Mammary epithelial cell (primary cell): ENCODE measurements at regions of chr14 and their contacts with region 1.

Region 1: GRCh38 chr14:94036313-94037050 is 10.3 kb downstream of the OTUB2 start:
- DNase-seq: peak; percentile 46
- H3K4me3 ChIP-seq: no peak overlapping the region
- H3K27ac ChIP-seq: no peak overlapping the region
- H3K4me1 ChIP-seq: no peaks in the 10 kb centered on the region
- H3K27me3 ChIP-seq: no peaks in the 10 kb centered on the region
- CTCF ChIP-seq: peak; percentile 86 to 90

Region 2: DNA sequence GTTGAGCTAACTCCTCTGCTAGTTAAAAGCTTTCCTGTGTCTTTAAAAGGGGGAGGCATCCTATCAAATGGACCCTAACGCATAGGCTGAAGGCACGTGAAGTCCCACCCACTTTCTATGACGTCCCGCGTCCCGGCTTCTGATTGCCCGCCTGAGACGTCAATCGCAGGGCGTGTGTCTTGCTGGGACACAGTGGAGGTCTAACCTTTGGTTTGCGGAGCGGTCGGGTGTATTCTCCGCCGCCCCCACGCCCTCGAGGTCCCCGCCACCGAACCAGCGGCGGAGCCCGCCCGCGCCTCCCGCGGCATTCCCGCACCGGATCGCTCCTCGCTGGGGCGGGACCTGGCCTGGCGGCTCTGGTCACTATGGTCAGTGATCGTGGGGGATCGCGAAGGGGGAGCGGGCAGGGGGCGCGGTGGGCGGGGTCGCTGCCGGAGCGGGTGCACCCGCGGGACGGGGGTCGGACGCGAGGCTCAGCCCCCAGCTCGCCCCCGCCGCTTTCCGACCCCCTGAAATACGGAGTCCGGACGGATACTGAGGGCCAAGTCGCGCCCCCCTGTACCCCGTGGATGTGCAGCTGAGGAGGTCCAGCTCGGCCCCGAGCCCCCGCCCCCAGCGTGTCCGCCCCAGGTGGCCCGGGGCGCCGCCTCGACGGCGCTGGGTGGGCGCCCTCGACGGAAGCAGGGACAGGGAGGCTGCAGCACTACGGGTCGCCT is 10.2 kb before region 1 on chr14 and contains the start of gene OTUB2:
- CTCF ChIA-PET with region 1: no interaction called
- dilution Hi-C with region 1: no loop called
- in situ Hi-C with region 1: no loop called
- intact Hi-C with region 1: no loop called
- DNase-seq: peak; percentile 100
- H3K4me3 ChIP-seq: peak within 1 kb of the TSS; percentile 43 to 64 (median 52)
- H3K27ac ChIP-seq: peak within 1 kb of the TSS; percentile 42
- H3K4me1 ChIP-seq: peaks cover 25% of the 10 kb centered on the region
- H3K27me3 ChIP-seq: no peaks in the 10 kb centered on the region
- CTCF ChIP-seq: no peak
- total RNA-seq, gene OTUB2: 3.7 to 4.8 TPM

Region 3: GRCh38 chr14:94051115-94051514 is 14.6 kb after region 1 on chr14:
- CTCF ChIA-PET with region 1: no interaction called
- dilution Hi-C with region 1: no loop called
- in situ Hi-C with region 1: no loop called
- intact Hi-C with region 1: no loop called
- DNase-seq: peak; percentile 24
- H3K4me3 ChIP-seq: no peak overlapping the region
- H3K27ac ChIP-seq: no peak overlapping the region
- H3K4me1 ChIP-seq: no peaks in the 10 kb centered on the region
- H3K27me3 ChIP-seq: no peaks in the 10 kb centered on the region
- CTCF ChIP-seq: peak in 1 of 2 donors; percentile 33

Region 4: DNA sequence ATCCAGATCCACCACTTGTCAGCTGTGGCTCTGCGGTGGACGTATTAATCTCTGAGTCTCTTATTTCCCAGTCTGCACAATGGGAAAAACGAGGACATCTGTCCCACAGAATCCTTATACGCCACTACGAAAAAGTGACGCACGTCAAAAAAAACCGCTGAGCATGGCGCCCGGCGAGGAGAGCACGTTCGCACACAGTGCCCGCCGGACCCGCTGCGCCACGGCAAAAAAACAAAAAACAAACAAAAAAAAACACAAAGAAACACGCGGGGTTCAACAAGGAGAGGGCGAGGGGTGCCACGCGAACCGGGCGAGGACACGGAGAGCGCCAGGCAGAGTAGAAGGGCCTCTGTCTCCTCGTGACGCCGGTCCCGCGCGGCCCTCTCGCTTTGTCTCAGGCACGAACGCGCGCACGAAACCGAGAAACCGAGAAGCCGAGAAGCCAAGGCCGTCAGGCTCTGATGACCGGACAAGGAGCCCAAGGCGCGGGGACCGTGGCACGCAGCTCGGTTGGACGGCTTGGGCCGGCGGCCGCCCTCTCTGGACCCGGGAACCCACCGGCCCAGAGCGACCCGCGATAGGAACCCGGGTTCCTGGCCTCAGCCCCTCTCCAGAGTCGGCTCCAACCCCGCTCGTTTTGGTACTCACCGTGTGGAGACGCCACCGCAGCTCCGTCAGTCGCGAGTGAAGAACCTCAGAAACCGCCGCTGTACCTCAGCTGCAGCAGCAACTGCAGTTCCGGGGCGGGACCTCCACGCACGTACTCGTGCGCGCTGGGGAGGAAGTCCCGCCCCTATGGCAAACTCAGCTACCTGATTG is 44.2 kb after region 1 on chr14 and contains the start of gene DDX24:
- CTCF ChIA-PET with region 1: no interaction called
- dilution Hi-C with region 1: loop called (anchors 5 kb)
- in situ Hi-C with region 1: no loop called
- intact Hi-C with region 1: no loop called
- DNase-seq: peak; percentile 95
- H3K4me3 ChIP-seq: peak within 1 kb of the TSS; percentile 93 to 99 (median 96)
- H3K27ac ChIP-seq: peak within 1 kb of the TSS; percentile 95
- H3K4me1 ChIP-seq: peaks cover 18% of the 10 kb centered on the region
- H3K27me3 ChIP-seq: no peaks in the 10 kb centered on the region
- CTCF ChIP-seq: no peak
- total RNA-seq, gene DDX24: 94.7 to 156 TPM

Region 5: DNA sequence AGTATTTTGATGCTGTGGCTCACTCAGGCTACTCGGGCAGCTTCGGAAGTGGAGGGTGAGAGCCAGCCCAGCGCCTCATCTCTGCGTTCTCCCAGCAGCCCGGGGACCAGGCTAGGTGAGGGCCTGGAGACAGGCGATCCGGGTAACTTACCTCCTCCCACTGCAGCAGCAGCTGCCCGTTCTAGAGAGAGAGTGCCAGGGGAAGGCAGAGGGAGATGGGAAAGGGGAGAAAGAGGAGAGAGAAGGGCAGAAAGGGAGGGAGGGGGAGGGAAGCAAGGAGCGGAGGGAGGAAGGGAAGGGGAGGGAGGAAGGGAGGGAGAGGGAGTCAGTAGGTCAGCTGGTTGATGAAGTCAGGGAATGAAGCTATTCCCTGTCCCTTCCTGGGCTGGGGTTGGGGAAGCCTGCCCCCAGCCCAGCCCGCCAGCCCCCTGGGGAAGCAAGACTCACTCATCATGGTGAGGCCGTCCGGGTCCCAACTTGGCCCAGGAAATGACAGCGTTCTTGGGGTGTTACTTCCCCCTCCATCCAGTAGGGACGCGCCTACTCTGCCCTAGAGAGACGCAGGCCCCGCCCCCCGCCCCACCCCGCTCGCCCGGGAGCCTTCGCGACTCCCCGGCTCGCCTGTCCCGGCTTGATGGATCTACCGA is 92.8 kb after region 1 on chr14 and contains the start of gene IFI27L2:
- CTCF ChIA-PET with region 1: interaction called, 6 read pairs
- dilution Hi-C with region 1: no loop called
- in situ Hi-C with region 1: loop called in 1 of 2 experiments (anchors 10 kb)
- intact Hi-C with region 1: loop called (anchors 2 kb)
- DNase-seq: peak; percentile 87
- H3K4me3 ChIP-seq: peak within 1 kb of the TSS; percentile 52 to 62 (median 57)
- H3K27ac ChIP-seq: no peak within 1 kb of the TSS
- H3K4me1 ChIP-seq: peaks cover 7% of the 10 kb centered on the region
- H3K27me3 ChIP-seq: no peaks in the 10 kb centered on the region
- CTCF ChIP-seq: peak in 1 of 2 donors; percentile 43
- total RNA-seq, gene IFI27L2: 68.0 to 122 TPM

Region 6: GRCh38 chr14:94180655-94181271 is 144.3 kb after region 1 on chr14:
- CTCF ChIA-PET with region 1: no interaction called
- dilution Hi-C with region 1: no loop called
- in situ Hi-C with region 1: loop called in 1 of 2 experiments (anchors 10 kb)
- intact Hi-C with region 1: loop called (anchors 1 kb)
- DNase-seq: peak; percentile 60
- H3K4me3 ChIP-seq: peak overlapping the region in 2 of 3 experiments; percentile 37 to 45
- H3K27ac ChIP-seq: peak overlapping the region; percentile 61
- H3K4me1 ChIP-seq: peaks cover 23% of the 10 kb centered on the region
- H3K27me3 ChIP-seq: no peaks in the 10 kb centered on the region
- CTCF ChIP-seq: peak; percentile 58 to 63

Region 7: GRCh38 chr14:94307410-94307992 is 271.0 kb after region 1 on chr14:
- CTCF ChIA-PET with region 1: no interaction called
- dilution Hi-C with region 1: no loop called
- in situ Hi-C with region 1: no loop called
- intact Hi-C with region 1: loop called (anchors 5 kb)
- DNase-seq: peak; percentile 30
- H3K4me3 ChIP-seq: no peak overlapping the region
- H3K27ac ChIP-seq: no peak overlapping the region
- H3K4me1 ChIP-seq: peaks cover 6% of the 10 kb centered on the region
- H3K27me3 ChIP-seq: no peaks in the 10 kb centered on the region
- CTCF ChIP-seq: peak; percentile 42 to 47

Region 8: GRCh38 chr14:94412671-94413638 is 376.5 kb after region 1 on chr14:
- CTCF ChIA-PET with region 1: no interaction called
- dilution Hi-C with region 1: no loop called
- in situ Hi-C with region 1: no loop called
- intact Hi-C with region 1: loop called (anchors 10 kb)
- DNase-seq: peak; percentile 51
- H3K4me3 ChIP-seq: no peak overlapping the region
- H3K27ac ChIP-seq: no peak overlapping the region
- H3K4me1 ChIP-seq: peaks cover 18% of the 10 kb centered on the region
- H3K27me3 ChIP-seq: no peaks in the 10 kb centered on the region
- CTCF ChIP-seq: peak; percentile 50 to 82

Region 9: GRCh38 chr14:94665121-94665520 is 628.6 kb after region 1 on chr14:
- CTCF ChIA-PET with region 1: no interaction called
- dilution Hi-C with region 1: loop called (anchors 10 kb)
- in situ Hi-C with region 1: no loop called
- intact Hi-C with region 1: no loop called
- DNase-seq: no peak
- H3K4me3 ChIP-seq: no peak overlapping the region
- H3K27ac ChIP-seq: no peak overlapping the region
- H3K4me1 ChIP-seq: no peaks in the 10 kb centered on the region
- H3K27me3 ChIP-seq: no peaks in the 10 kb centered on the region
- CTCF ChIP-seq: no peak